ENCODE measurements at regions of chr7 and their contacts with region 1.

Region 1: GRCh38 chr7:114843102-114843501 is 78.8 kb upstream of the MDFIC start:
- DNase-seq: no peak
- H3K4me3 ChIP-seq: no peak overlapping the region
- H3K27ac ChIP-seq: no peak overlapping the region
- H3K4me1 ChIP-seq: no peaks in the 10 kb centered on the region
- H3K27me3 ChIP-seq: no peaks in the 10 kb centered on the region
- CTCF ChIP-seq: no peak

Region 2: GRCh38 chr7:113955157-113955556 is 887.9 kb before region 1 on chr7:
- CTCF ChIA-PET with region 1: interaction called, 12 read pairs
- POLR2A ChIA-PET with region 1: no interaction called
- intact Hi-C with region 1: no loop called
- DNase-seq: no peak
- H3K4me3 ChIP-seq: no peak overlapping the region
- H3K27ac ChIP-seq: no peak overlapping the region
- H3K4me1 ChIP-seq: no peaks in the 10 kb centered on the region
- H3K27me3 ChIP-seq: no peaks in the 10 kb centered on the region
- CTCF ChIP-seq: no peak